PC-9 (cell line): ENCODE measurements at regions of chr14 and their contacts with region 1.

Region 1: DNA sequence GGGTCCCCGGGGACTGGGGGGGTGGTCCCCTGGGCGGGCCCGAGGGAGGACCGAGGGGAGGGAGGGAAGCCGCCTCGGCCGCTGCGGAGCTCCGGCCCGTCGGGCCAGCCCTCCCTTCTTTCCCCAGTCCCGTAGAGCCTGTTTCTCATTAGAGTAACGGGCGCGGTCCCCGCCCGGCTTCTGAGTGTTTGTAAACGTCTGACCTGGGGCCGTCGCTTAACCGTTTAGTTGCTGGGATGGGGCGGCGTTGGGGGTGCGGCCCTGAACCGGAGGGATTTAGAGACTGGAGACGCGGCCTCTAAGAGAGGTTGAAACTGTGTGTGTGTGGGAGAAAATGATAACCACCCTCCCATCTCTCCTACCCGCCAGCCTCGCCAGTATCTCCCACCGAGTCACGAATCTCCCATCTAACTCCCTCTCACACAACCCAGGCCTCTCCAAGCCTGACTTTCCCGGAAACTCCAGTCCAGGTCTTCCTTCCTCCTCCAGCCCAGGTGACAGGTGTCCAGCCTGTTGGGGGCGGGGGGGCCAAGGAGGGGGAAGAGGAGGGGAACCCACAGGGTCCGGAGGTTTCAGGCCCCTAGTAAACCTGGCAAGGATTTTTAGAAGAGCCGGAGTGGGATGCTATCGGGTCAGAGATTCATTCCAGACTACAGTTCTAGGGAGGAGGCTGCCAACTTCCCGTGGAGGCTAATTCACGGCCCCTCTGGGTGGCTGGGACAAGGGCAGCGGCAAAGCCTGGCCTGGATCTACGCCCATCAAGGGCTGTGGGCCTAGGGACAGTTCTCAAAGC is 1.1 kb upstream of the NFATC4 start:
- DNase-seq: peak; percentile 85 to 90
- H3K4me3 ChIP-seq: peak overlapping the region; percentile 66
- H3K27ac ChIP-seq: peak overlapping the region; percentile 68
- H3K4me1 ChIP-seq: peaks cover 7% of the 10 kb centered on the region
- H3K27me3 ChIP-seq: no peaks in the 10 kb centered on the region
- CTCF ChIP-seq: no peak

Region 2: GRCh38 chr14:24241829-24242443 is 125.0 kb before region 1 on chr14:
- CTCF ChIA-PET with region 1: no interaction called
- POLR2A ChIA-PET with region 1: interaction called, 13 read pairs
- intact Hi-C with region 1: no loop called
- DNase-seq: peak; percentile 75 to 88
- H3K4me3 ChIP-seq: peak overlapping the region; percentile 86
- H3K27ac ChIP-seq: peak overlapping the region; percentile 92
- H3K4me1 ChIP-seq: peaks cover 6% of the 10 kb centered on the region
- H3K27me3 ChIP-seq: no peaks in the 10 kb centered on the region
- CTCF ChIP-seq: peak; percentile 56

Region 3: DNA sequence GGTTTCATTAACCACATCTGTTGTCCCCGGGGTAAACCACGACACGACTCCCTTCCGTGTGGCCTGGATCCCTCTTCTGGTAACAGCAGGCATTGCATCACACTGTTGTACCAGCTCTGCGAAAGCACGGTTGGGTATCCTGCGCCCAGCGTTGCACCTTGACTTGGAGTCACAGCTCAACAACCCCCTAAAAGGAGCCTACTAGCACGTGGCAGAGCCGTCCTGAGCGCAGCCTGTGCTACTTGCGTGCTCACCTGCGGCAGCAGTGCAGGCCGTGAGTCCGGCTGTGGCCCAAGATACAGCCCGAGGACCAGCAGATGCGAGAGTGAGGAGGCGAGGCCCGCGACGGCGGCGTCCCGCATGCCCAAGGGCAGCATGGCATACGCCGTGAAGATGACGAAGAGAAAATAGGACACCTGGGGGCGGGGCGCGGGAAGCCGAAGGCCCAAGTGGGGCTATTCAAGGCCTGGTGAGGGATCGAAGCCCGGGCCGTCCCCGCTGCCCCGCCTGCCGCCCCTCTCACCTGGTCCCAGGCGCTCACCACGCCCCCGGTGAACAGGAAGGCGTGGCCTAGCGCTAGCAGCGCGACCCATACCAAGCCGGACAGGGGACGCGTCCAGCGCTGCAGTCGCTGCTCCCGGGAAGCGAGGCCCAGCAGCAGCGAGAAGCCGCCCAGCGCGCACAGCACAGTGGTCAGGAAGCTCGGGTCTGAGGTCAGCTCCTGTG is 34.5 kb before region 1 on chr14:
- CTCF ChIA-PET with region 1: no interaction called
- POLR2A ChIA-PET with region 1: no interaction called
- intact Hi-C with region 1: loop called (anchors 1 kb)
- DNase-seq: peak in 1 of 2 experiments; percentile 53
- H3K4me3 ChIP-seq: no peak overlapping the region
- H3K27ac ChIP-seq: no peak overlapping the region
- H3K4me1 ChIP-seq: peaks cover 3% of the 10 kb centered on the region; the same call in 1 of the 2 replicates
- H3K27me3 ChIP-seq: no peaks in the 10 kb centered on the region
- CTCF ChIP-seq: peak; percentile 45; the same call in 1 of the 2 replicates

Region 4: DNA sequence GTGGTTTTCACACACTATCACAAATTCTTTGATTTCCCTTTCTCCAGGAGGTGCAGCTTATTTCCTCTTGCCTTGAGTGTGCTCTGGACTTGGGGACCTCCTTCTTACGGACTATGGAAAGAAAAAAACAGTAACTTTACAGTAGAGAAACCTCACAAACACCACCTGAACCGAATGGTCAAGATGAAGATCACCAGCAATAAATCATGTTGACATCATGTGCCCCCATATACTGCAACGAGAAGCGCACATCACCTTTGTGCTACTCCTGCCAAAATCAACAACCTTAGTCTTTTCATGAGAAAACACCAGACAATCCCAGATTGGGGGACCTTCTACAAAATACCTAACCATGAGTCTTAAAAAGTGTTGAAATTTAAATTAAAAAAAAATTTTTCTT is 18.6 kb after region 1 on chr14:
- CTCF ChIA-PET with region 1: interaction called, 14 read pairs
- POLR2A ChIA-PET with region 1: interaction called, 10 read pairs
- intact Hi-C with region 1: no loop called
- DNase-seq: no peak
- H3K4me3 ChIP-seq: no peak overlapping the region
- H3K27ac ChIP-seq: no peak overlapping the region
- H3K4me1 ChIP-seq: peaks cover under 1% of the 10 kb centered on the region; the same call in 1 of the 2 replicates
- H3K27me3 ChIP-seq: no peaks in the 10 kb centered on the region
- CTCF ChIP-seq: no peak

Region 5: GRCh38 chr14:24411443-24412389 is 44.8 kb after region 1 on chr14:
- CTCF ChIA-PET with region 1: interaction called, 5 read pairs
- POLR2A ChIA-PET with region 1: no interaction called
- intact Hi-C with region 1: loop called (anchors 1 kb)
- DNase-seq: peak in 1 of 2 experiments; percentile 27
- H3K4me3 ChIP-seq: no peak overlapping the region
- H3K27ac ChIP-seq: no peak overlapping the region
- H3K4me1 ChIP-seq: no peaks in the 10 kb centered on the region
- H3K27me3 ChIP-seq: no peaks in the 10 kb centered on the region
- CTCF ChIP-seq: peak; percentile 72